H1 (cell line): ENCODE measurements at regions of chr4 and their contacts with region 1.

Region 1: GRCh38 chr4:140227286-140227685 is 73.3 kb upstream of the MAML3 start:
- DNase-seq: peak in 1 of 2 experiments; percentile 16
- H3K4me3 ChIP-seq: no peak overlapping the region
- H3K27ac ChIP-seq: no peak overlapping the region
- H3K4me1 ChIP-seq: peaks cover 0 to 7% (median 4%) of the 10 kb centered on the region in 4 experiments; a peak in 3 of 7 replicates
- H3K27me3 ChIP-seq: no peaks in the 10 kb centered on the region
- CTCF ChIP-seq: no peak
- EP300 ChIP-seq: no peak
- POLR2A ChIP-seq: no peak
- RAD21 ChIP-seq: no peak

Region 2: DNA sequence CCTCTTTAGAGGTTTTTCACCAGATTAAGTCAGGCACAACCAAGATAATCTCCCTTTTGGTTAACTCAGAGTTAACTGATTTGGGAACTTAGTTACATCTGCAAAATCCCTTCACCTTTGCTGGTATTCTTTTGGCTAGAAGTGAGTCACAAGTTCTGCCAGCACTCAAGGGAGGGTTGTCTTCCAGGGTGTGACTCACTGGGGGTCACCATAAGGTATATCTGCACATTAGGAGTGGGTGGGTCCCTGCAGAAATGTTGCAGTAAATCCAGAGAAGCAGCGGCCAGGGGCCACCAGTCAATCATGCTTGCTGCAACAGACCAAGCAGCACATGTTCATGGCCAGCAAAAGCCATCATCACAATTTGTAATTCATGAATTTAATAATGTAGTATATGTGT is 13.5 kb before region 1 on chr4:
- CTCF ChIA-PET with region 1: no interaction called
- POLR2A ChIA-PET with region 1: no interaction called
- DNase-seq: no peak
- H3K4me3 ChIP-seq: no peak overlapping the region
- H3K27ac ChIP-seq: no peak overlapping the region
- H3K4me1 ChIP-seq: peaks cover 0 to 9% (median under 1%) of the 10 kb centered on the region in 4 experiments; a peak in 4 of 7 replicates
- H3K27me3 ChIP-seq: no peaks in the 10 kb centered on the region
- CTCF ChIP-seq: no peak
- EP300 ChIP-seq: no peak
- POLR2A ChIP-seq: no peak
- RAD21 ChIP-seq: no peak

Region 3: GRCh38 chr4:140237606-140237986 is 10.3 kb after region 1 on chr4:
- CTCF ChIA-PET with region 1: interaction called, 9 read pairs
- POLR2A ChIA-PET with region 1: interaction called, 13 read pairs
- DNase-seq: peak; percentile 71 to 72
- H3K4me3 ChIP-seq: peak overlapping the region in 2 of 4 experiments; percentile 27 to 45; a peak in 4 of 8 replicates
- H3K27ac ChIP-seq: peak overlapping the region; percentile 66; the same call in 1 of the 2 replicates
- H3K4me1 ChIP-seq: peaks cover 17 to 25% (median 25%) of the 10 kb centered on the region in 4 experiments
- H3K27me3 ChIP-seq: no peaks in the 10 kb centered on the region; a peak in 2 of 7 replicates
- CTCF ChIP-seq: no peak
- EP300 ChIP-seq: no peak
- POLR2A ChIP-seq: peak in 1 of 2 experiments; percentile 74; a peak in 1 of 3 replicates
- RAD21 ChIP-seq: no peak